Caco-2 (cell line): ENCODE measurements at regions of chr15 and their contacts with region 1.

Region 1: DNA sequence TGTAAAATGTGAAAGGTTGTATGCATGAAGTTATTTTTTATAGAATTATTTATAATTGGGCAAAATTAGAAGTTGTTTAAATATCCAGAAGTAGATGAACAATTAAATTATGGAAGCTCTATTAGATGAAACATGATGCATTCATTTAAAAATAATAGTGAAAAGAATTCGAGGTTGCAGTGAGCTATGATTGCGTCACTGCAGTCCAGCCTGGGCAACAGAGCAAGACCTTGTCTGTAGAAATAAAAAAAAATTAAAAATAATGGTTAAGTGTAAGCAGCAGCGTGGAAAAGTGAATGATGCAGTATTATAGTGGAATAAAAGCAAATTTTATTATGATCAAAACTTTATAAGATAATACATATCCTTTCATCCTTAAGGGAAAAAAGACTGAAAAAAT is 14.3 kb downstream of the BUB1B start:
- DNase-seq: no peak
- H3K4me3 ChIP-seq: no peak overlapping the region
- H3K4me3 Mint-ChIP-seq: no peak overlapping the region
- H3K27ac Mint-ChIP-seq: no peak overlapping the region
- H3K4me1 ChIP-seq: no peaks in the 10 kb centered on the region
- H3K4me1 Mint-ChIP-seq: no peaks in the 10 kb centered on the region
- H3K27me3 ChIP-seq: no peaks in the 10 kb centered on the region
- H3K27me3 Mint-ChIP-seq: no peaks in the 10 kb centered on the region
- CTCF ChIP-seq: no peak

Region 2: DNA sequence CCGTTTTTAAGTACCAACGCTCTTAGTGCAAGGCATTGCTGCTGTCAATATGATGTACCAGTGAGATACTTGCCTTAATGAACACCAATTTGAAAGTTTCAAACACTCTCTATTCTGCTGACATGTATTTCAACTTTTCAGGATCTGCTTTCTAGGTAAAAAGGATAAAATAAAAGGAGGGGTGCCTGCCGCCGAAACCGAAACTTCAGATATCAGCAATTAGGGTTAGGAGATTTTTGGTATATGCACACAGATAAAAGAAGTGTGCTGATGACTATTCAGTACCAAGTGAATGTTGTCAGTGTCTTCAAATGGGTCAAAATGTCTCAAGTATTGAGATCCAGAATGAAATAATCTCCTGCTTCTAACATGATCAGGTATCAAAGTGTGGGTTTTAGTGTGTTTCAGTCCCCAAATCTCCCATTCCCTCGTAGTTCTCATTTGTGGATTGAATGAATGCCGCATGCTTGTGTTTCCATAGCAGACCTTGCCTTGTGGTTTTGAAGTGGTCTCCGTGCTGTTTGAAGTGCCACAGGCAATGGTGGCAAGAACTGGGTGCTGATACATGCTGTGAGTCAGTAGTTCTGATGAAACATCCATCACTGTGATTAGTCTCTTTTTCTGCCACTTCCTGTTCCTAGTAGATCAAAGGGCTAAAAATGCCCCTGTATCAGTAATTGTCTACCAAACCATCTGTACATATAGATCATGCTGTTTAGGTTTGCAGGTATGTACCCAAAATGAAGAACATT is 318.1 kb after region 1 on chr15:
- CTCF ChIA-PET with region 1: no interaction called
- POLR2A ChIA-PET with region 1: interaction called, 11 read pairs
- intact Hi-C with region 1: no loop called
- DNase-seq: no peak
- H3K4me3 ChIP-seq: no peak overlapping the region
- H3K4me3 Mint-ChIP-seq: no peak overlapping the region
- H3K27ac Mint-ChIP-seq: no peak overlapping the region
- H3K4me1 ChIP-seq: no peaks in the 10 kb centered on the region
- H3K4me1 Mint-ChIP-seq: no peaks in the 10 kb centered on the region
- H3K27me3 ChIP-seq: no peaks in the 10 kb centered on the region; the same call in 1 of the 2 replicates
- H3K27me3 Mint-ChIP-seq: peaks cover 11% of the 10 kb centered on the region
- CTCF ChIP-seq: no peak